T-cell (primary cell): ENCODE measurements at regions of chr4 and their contacts with region 1.

Region 1: GRCh38 chr4:112604589-112604988 is 32.1 kb downstream of the ZGRF1 start:
- DNase-seq: peak in 25 of 35 experiments; percentile 1 to 62 (median 27)
- ATAC-seq: peak in 3 of 4 experiments; percentile 58 to 62 (median 59)
- H3K4me3 ChIP-seq: no peak overlapping the region
- H3K4me3 Mint-ChIP-seq: no peak overlapping the region
- H3K27ac ChIP-seq: no peak overlapping the region
- H3K27ac Mint-ChIP-seq: no peak overlapping the region
- H3K4me1 ChIP-seq: no peaks in the 10 kb centered on the region
- H3K4me1 Mint-ChIP-seq: no peaks in the 10 kb centered on the region
- H3K27me3 ChIP-seq: no peaks in the 10 kb centered on the region
- H3K27me3 Mint-ChIP-seq: no peaks in the 10 kb centered on the region

Region 2: GRCh38 chr4:112099701-112100297 is 504.8 kb before region 1 on chr4:
- CTCF ChIA-PET with region 1: interaction called, 5 to 16 read pairs
- POLR2A ChIA-PET with region 1: no interaction called
- DNase-seq: peak in 2 of 35 experiments; percentile 5 to 67
- ATAC-seq: peak in 3 of 4 experiments; percentile 53 to 83 (median 63)
- H3K4me3 ChIP-seq: no peak overlapping the region
- H3K4me3 Mint-ChIP-seq: no peak overlapping the region
- H3K27ac ChIP-seq: no peak overlapping the region
- H3K27ac Mint-ChIP-seq: no peak overlapping the region
- H3K4me1 ChIP-seq: no peaks in the 10 kb centered on the region
- H3K4me1 Mint-ChIP-seq: peaks cover 0 to 5% (median 0%) of the 10 kb centered on the region in 3 donors
- H3K27me3 ChIP-seq: no peaks in the 10 kb centered on the region
- H3K27me3 Mint-ChIP-seq: peaks cover 3 to 4% of the 10 kb centered on the region in 2 donors